CD4-positive, alpha-beta T cell (primary cell): ENCODE measurements at regions of chr13 and their contacts with region 1.

Region 1: DNA sequence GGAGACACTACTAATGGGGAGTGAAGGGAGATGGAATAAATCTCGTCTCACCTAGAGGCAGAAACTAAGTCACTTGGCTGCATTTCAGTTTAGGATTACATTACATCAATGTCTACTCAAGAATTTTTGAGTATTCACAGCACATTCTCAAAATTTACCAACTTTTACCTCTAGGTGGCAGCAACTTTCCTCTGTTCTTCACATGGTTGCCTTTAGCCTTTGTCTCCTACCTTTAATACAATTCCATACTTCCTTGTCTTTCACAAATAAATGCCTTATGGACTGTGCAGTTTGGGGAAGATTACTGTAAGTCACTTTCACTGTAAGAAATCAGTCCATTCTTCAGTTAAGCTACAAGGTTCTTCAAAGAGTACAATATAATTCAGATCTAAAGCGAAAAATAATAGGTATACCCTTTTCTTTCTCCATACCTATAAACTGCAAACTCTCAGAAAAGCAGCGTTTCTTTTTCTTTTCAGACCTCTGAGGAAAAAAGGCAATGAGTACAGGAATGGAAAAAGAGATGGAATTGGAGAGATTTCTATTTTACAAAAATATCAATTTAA is 379.4 kb downstream of the KLF12 start:
- DNase-seq: peak in 7 of 14 experiments; percentile 4 to 78 (median 59)
- ATAC-seq: peak; percentile 60
- H3K4me3 ChIP-seq: no peak overlapping the region
- H3K4me3 Mint-ChIP-seq: no peak overlapping the region
- H3K27ac ChIP-seq: no peak overlapping the region
- H3K27ac Mint-ChIP-seq: peak overlapping the region; percentile 21
- H3K4me1 ChIP-seq: peaks cover 2% of the 10 kb centered on the region
- H3K4me1 Mint-ChIP-seq: peaks cover 62% of the 10 kb centered on the region
- H3K27me3 ChIP-seq: no peaks in the 10 kb centered on the region
- H3K27me3 Mint-ChIP-seq: no peaks in the 10 kb centered on the region
- CTCF ChIP-seq: peak; percentile 86

Region 2: DNA sequence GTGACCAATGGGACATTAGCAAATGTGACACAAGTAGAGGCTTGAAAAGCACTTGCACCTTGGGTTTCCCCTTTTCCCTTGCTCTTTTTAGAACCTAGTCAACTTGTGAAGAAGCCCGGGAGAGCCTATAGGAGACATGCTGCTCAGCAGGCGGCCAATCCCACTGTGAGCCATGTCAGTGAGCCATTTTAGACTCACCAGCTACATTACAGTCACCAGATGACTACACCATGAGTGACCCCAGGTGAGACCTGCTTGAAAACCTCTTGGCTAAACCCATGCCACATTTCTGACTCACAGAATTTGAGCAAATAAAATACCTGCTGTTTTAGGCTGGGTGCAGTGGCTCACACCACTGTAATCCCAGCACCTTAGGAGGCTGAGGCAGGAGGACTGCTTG is 61.9 kb after region 1 on chr13:
- CTCF ChIA-PET with region 1: no interaction called
- POLR2A ChIA-PET with region 1: no interaction called
- intact Hi-C with region 1: loop called in 1 of 2 experiments (anchors 5 kb)
- DNase-seq: no peak
- ATAC-seq: no peak
- H3K4me3 ChIP-seq: no peak overlapping the region
- H3K4me3 Mint-ChIP-seq: no peak overlapping the region
- H3K27ac ChIP-seq: no peak overlapping the region
- H3K27ac Mint-ChIP-seq: peak overlapping the region; percentile 10
- H3K4me1 ChIP-seq: peaks cover 3% of the 10 kb centered on the region
- H3K4me1 Mint-ChIP-seq: peaks cover 44% of the 10 kb centered on the region
- H3K27me3 ChIP-seq: no peaks in the 10 kb centered on the region
- H3K27me3 Mint-ChIP-seq: no peaks in the 10 kb centered on the region
- CTCF ChIP-seq: no peak

Region 3: GRCh38 chr13:73835138-73835721 is 80.4 kb after region 1 on chr13:
- CTCF ChIA-PET with region 1: no interaction called
- POLR2A ChIA-PET with region 1: no interaction called
- intact Hi-C with region 1: loop called in 1 of 2 experiments (anchors 5 kb)
- DNase-seq: peak in 3 of 14 experiments; percentile 65 to 69 (median 68)
- ATAC-seq: peak; percentile 73
- H3K4me3 ChIP-seq: no peak overlapping the region
- H3K4me3 Mint-ChIP-seq: no peak overlapping the region
- H3K27ac ChIP-seq: no peak overlapping the region
- H3K27ac Mint-ChIP-seq: no peak overlapping the region
- H3K4me1 ChIP-seq: peaks cover 7% of the 10 kb centered on the region
- H3K4me1 Mint-ChIP-seq: peaks cover 59% of the 10 kb centered on the region
- H3K27me3 ChIP-seq: no peaks in the 10 kb centered on the region
- H3K27me3 Mint-ChIP-seq: no peaks in the 10 kb centered on the region
- CTCF ChIP-seq: peak; percentile 81

Region 4: DNA sequence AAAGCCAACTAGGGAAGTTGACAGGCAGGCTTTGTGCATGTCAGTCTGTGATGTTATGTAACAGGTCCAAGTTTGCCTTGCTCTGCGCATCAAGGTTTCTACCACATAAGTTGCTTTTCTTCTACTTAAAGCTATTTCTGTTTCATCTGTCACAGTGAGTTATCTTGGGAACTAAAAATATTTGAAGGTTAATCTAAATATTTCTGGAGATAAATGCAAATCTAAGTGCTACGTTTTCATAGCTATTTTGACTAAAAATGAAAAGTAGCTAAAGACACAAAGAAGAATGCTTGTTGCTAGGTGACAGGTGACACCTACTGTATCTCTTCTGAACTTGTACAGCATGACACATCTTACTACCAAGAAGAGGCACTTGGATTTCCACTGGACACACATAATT is 243.8 kb after region 1 on chr13:
- CTCF ChIA-PET with region 1: no interaction called
- POLR2A ChIA-PET with region 1: no interaction called
- intact Hi-C with region 1: loop called in 1 of 2 experiments (anchors 10 kb)
- DNase-seq: peak in 2 of 14 experiments; percentile 30 to 37
- ATAC-seq: peak; percentile 77
- H3K4me3 ChIP-seq: no peak overlapping the region
- H3K4me3 Mint-ChIP-seq: peak overlapping the region; percentile 46
- H3K27ac ChIP-seq: no peak overlapping the region
- H3K27ac Mint-ChIP-seq: peak overlapping the region; percentile 78
- H3K4me1 ChIP-seq: peaks cover 4% of the 10 kb centered on the region
- H3K4me1 Mint-ChIP-seq: peaks cover 88% of the 10 kb centered on the region
- H3K27me3 ChIP-seq: no peaks in the 10 kb centered on the region
- H3K27me3 Mint-ChIP-seq: no peaks in the 10 kb centered on the region
- CTCF ChIP-seq: no peak

Region 5: GRCh38 chr13:75219479-75220237 is 1464.8 kb after region 1 on chr13:
- CTCF ChIA-PET with region 1: no interaction called
- POLR2A ChIA-PET with region 1: no interaction called
- intact Hi-C with region 1: loop called (anchors 1 to 5 kb)
- DNase-seq: peak; percentile 70 to 90 (median 82)
- ATAC-seq: peak; percentile 99
- H3K4me3 ChIP-seq: no peak overlapping the region
- H3K4me3 Mint-ChIP-seq: peak overlapping the region; percentile 52
- H3K27ac ChIP-seq: no peak overlapping the region
- H3K27ac Mint-ChIP-seq: no peak overlapping the region
- H3K4me1 ChIP-seq: peaks cover 7% of the 10 kb centered on the region
- H3K4me1 Mint-ChIP-seq: peaks cover 8% of the 10 kb centered on the region
- H3K27me3 ChIP-seq: peaks cover 0 to 22% of the 10 kb centered on the region in 2 experiments
- H3K27me3 Mint-ChIP-seq: peaks cover 52% of the 10 kb centered on the region
- CTCF ChIP-seq: peak; percentile 95